HAP-1 (cell line): ENCODE measurements at regions of chr10 and their contacts with region 1.

Region 1: DNA sequence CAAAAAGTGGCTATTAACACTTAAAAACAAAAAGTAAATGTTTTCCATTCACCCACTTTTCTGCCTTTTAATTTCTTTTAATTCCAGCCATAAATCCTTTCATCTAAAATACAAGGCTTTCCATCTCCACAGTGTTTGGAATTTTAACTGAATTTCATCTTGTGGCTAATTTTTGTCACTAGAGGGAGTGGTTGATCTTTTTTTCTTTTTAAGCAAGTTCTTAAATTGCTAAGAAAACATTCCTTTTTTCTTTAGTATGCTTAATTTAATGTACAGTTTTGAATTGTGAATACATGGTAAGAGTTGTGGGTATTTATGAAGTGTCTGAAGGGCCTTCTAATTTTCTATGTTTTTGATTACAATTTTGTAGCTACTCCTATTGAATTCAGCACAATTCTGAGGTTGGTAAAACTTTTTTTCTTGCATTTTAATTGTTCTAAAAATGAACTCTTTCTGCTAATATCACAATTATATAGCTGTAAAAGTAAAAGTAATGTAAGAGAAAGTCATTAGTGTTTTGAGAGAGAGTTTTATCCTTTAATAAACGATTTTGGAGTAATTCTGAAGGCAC is 54.9 kb upstream of the ANK3 start:
- DNase-seq: peak in 1 of 2 experiments; percentile 63
- H3K4me3 ChIP-seq: no peak overlapping the region
- H3K4me1 ChIP-seq: no peaks in the 10 kb centered on the region
- H3K27me3 ChIP-seq: 0 out of 2 replicates have a peak, but pooled peaks cover 3% of the 10 kb centered on the region

Region 2: GRCh38 chr10:60140651-60141632 is 303.6 kb before region 1 on chr10:
- in situ Hi-C with region 1: no loop called
- DNase-seq: peak; percentile 78 to 96
- H3K4me3 ChIP-seq: peak overlapping the region; percentile 42
- H3K4me1 ChIP-seq: peaks cover 31% of the 10 kb centered on the region
- H3K27me3 ChIP-seq: no peaks in the 10 kb centered on the region

Region 3: DNA sequence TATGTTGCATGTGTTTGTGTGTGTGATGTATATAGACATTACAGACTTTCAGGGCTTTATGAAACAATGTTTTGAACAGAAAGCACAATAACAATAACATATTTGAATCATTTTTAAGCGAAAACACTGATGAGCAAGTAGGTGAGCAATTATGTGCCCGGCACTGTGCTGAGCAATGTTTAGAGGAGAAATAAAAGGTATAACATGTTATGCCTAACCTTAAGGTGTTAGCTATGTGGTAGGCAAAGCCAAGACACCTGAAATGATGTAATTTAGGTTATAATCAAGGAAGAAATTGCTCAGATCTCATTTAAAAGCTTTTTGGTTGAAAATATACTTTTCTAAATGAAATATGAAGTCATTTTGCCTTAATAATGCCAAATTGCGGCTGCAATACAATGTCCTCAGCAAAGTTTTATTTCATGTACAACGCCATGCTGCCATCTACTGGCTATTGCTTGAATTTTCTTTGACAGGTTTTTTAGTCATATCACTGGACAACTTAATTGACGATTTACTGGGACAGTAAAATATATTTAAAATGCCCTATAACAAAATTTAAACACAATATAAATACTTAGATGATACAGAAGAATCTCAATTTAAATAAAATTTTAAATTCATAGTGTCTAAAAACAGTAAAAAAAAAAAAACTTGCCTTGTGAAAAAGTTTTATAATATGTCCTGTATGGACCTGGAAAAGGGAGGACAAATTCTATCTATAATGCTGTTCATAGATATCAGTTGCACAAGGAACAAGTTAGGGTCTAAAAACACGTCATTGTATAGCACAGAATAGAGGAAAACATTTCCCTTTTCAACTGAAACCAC is 202.6 kb after region 1 on chr10:
- in situ Hi-C with region 1: loop called (anchors 5 kb)
- DNase-seq: peak; percentile 60 to 67
- H3K4me3 ChIP-seq: no peak overlapping the region
- H3K4me1 ChIP-seq: peaks cover 38% of the 10 kb centered on the region
- H3K27me3 ChIP-seq: no peaks in the 10 kb centered on the region